AG04449 (cell line): ENCODE measurements at regions of chr17 and their contacts with region 1.

Region 1: DNA sequence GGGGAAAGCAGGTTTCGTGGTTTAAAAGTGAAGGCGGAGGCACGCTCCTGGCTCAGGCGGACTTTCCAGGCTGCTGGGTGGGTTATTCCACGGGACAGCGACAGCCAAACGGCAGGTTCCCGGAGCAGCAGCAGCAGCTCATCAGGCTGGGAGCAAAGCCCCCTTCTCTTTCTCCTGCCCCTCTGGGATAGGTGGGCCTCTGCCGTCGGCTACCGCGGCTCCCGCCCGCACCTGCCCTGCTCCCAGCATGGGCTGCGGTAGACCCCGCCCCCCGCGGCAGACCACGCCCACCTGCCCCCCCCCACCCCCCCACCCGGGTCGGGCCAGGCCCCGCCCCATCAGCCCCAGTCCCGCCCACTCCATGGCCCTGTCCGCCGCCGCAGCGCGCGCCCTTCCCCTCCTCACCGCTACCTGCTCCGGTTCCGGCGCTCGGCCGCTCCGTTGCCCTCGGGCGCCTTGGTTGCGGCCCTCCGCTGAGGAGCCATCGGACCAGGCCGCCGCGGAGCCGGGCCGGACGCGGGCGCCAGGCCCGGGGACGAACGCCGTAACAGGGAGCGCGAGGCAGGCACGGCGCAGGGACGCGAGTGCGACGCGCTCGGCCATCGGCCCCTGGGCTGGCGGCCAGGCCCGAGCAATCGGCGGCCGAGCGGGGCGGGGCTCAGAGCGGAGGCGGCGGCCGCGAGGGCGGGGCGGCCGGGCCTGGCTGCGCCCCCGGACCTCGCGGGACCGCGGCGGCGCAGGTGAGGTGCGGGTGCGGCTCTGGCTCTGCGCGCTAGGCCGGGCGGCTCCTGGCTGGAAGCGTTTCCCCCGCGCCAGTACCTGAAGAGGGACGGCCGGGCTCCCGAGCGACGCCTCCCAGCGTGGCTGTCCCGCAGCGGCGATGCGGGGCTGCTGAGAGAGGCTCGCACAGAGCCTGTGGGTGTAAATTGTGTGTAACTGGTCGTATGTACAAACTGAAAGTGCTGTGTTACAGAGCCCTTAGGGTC is at the starts of genes HEXD and OGFOD3:
- DNase-seq: no peak
- H3K4me3 ChIP-seq: peak within 1 kb of the TSS; percentile 80
- CTCF ChIP-seq: no peak

Region 2: DNA sequence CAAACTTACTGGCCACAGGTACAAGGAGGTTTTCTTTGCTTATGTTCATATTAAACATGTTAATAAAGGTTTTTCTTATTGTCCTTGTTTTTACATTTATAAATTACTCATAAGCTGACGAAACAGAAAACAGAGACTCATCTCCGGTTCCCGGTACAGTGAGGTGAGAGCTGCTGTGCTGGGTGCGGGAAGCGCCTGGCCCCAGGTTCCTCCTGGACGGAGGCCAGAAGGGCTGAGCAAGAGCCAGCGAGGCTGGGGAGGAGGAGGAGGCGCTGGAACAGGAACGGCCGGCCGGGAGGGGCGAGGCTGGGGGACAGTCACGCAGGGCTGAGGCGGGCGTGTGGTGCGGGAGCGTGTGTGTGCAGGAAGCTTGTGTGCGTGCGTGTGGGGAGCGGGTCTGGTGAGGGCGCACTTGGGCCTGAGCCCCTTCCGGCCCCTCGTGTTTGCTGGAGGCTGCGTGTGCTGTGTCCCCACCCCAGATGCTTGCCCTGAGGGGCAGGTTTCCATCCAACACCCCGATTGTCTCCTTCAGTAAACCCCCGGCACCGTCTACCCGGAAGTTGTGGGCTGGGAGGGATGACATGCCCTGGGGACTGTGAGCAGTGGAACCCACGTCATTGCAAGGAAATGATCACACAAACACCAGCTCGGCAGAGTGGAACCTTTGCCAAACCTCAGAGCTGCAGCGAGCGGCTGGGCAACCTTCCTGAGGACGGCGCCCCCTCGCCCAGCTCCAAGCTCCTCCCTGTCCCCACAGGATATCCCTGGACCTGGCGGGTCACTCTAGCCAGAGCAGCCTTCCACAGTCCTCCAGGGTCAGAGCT is 120.4 kb before region 1 on chr17:
- CTCF ChIA-PET with region 1: interaction called, 61 read pairs
- POLR2A ChIA-PET with region 1: no interaction called
- DNase-seq: peak; percentile 63
- H3K4me3 ChIP-seq: peak overlapping the region; percentile 49
- CTCF ChIP-seq: no peak

Region 3: DNA sequence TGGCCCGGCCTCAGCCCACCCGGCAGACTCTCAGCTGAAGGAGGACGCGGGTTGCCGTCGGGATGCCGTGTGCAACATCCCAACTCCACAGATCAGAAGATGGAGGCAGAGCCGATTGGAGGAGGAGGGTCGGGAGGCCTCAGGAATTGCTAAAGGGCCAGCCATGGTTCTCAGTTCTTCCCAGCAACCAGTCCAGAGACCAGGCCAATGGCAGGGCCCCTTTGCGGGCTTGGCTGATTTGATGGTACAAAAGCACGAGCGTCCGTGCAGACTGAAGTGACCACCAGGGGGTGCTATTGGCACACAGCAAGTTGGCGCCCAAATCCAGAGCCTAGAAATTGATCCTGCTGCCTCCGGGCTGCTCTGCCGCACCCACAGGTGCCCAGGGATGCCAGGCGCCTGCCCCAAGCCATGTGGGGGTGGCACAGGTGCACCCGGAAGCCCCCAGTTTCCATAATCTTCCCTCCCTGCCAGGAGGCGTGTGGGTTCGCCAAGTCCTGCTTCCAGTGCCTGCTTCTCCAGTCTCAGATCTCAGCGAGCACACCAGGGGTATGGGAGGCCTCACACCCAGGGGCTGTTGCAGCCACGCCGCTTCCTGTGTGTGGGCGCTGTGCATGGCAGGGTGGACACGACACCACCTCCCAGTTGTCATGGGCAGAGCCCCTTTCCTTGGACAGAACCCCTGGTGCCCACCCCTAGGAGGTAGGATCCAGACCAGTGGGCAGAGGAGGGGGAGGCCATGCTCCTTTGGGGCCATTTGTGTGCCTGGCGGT is 66.4 kb before region 1 on chr17:
- CTCF ChIA-PET with region 1: interaction called, 84 read pairs
- POLR2A ChIA-PET with region 1: no interaction called
- DNase-seq: peak; percentile 36
- H3K4me3 ChIP-seq: no peak overlapping the region
- CTCF ChIP-seq: peak; percentile 94

Region 4: DNA sequence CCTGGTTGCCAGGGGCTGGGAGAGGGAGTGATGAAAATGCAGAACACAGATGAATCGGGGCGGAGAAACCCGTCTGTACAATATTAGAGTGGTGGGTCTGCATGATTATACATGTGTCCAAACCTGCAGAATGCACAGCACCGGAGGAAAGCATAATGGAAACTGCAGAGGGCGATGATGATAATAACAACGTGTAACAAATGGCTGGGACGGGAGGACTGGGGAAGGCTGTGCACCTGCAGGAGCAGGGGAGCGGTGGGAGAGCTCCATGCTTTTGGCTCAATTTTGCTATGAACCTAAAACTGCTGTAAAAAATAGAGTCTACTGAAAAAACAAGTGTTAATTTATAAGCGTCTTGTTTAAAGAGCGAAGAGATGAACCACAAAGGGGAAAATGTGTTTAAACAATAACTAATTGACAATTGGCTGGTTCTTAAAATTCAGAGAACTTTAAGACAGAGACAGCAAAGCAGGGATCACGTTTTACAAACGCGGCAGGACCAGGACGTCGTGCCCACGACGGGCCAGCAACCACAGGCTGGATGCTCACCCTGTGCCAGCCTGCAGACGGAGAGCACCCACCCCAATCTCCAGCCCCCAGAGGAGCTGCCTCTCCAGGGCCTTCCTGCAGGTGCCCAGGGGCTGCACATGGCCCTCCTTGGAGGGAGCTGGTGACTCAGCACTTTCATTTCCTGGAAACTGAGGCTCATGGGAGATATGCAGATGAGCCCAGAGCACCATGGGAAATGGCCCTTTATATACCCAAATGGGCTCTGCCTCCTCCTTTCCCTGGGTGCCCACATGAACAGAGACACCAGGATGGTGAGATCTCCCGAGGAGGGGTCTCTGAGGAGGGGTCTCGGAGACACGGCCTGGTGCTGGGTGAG is 59.6 kb before region 1 on chr17 and contains the start of gene TEX19:
- CTCF ChIA-PET with region 1: interaction called, 12 read pairs
- POLR2A ChIA-PET with region 1: no interaction called
- DNase-seq: no peak
- H3K4me3 ChIP-seq: no peak within 1 kb of the TSS
- CTCF ChIP-seq: no peak

Region 5: DNA sequence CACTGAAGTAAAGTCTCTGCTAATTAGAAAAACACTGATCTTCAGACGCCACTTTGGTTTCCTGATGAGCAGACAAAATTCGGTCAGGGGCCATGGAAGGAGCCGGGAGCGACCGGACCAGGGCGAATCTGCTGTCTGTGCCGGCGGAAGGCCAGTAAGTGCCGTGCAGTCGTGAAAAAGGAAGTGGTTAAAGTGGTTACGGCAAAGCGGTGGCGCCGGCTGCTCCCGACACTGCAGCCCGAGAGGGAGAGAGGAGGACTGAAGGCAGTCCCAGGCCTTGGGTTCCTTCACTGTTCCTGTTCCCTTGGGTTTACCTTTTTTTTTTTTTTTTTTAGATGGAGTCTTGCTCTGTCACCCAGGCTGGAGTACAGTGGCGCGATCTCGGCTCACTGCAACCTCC is 17.5 kb before region 1 on chr17:
- CTCF ChIA-PET with region 1: interaction called, 12 read pairs
- POLR2A ChIA-PET with region 1: no interaction called
- DNase-seq: no peak
- H3K4me3 ChIP-seq: no peak overlapping the region; the same call in 1 of the 2 replicates
- CTCF ChIP-seq: no peak

Region 6: DNA sequence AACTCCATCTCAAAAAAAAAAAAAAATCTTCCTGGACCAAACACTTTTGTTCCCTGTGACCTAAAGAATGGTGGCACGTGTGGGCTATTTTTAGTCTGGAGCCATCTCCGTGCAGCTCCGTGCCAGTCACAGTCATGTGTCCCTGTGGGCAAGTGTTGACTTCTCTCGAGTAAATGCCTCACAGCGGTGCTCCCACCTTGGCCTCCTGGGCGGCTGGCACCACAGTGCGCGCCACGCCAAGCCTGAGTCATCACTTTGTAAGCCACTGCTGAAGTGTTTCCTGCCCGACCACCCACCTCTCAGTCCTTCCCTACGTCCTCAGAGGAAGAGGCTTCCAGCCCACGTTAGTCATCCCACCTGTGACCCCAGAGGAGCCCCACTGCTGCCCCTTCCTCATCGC is 11.0 kb before region 1 on chr17:
- CTCF ChIA-PET with region 1: interaction called, 12 read pairs
- POLR2A ChIA-PET with region 1: no interaction called
- DNase-seq: no peak
- H3K4me3 ChIP-seq: no peak overlapping the region
- CTCF ChIP-seq: no peak